K562 (cell line): ENCODE measurements at regions of chr6 and their contacts with region 1.

Region 1: DNA sequence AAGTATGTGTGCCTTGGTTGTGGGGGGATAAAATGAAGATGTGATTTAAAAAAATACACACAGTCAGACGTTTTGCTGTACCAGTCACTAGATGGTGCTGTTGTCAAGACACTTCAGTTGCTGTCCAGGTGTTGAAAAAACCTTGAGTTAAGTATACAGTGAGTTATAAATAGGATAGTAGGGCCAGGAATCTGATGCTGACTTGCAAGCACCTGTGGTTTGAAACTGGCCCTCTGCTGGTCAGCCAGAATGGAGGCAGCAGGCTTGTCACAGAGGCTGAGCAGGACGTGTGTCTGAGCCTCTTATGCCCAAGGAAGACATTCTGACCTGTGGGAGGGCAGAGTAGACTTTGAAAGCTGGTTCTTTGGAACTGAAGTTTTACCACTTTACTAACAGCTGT is 27.8 kb downstream of the RNF8 start:
- DNase-seq: peak; percentile 57 to 81 (median 67)
- ATAC-seq: peak; percentile 92
- H3K4me3 ChIP-seq: no peak overlapping the region
- H3K27ac ChIP-seq: no peak overlapping the region
- H3K4me1 ChIP-seq: no peaks in the 10 kb centered on the region
- H3K27me3 ChIP-seq: no peaks in the 10 kb centered on the region
- CTCF ChIP-seq: peak; percentile 75 to 94 (median 93)
- EP300 ChIP-seq: no peak
- POLR2A ChIP-seq: no peak
- RAD21 ChIP-seq: peak; percentile 81 to 95

Region 2: DNA sequence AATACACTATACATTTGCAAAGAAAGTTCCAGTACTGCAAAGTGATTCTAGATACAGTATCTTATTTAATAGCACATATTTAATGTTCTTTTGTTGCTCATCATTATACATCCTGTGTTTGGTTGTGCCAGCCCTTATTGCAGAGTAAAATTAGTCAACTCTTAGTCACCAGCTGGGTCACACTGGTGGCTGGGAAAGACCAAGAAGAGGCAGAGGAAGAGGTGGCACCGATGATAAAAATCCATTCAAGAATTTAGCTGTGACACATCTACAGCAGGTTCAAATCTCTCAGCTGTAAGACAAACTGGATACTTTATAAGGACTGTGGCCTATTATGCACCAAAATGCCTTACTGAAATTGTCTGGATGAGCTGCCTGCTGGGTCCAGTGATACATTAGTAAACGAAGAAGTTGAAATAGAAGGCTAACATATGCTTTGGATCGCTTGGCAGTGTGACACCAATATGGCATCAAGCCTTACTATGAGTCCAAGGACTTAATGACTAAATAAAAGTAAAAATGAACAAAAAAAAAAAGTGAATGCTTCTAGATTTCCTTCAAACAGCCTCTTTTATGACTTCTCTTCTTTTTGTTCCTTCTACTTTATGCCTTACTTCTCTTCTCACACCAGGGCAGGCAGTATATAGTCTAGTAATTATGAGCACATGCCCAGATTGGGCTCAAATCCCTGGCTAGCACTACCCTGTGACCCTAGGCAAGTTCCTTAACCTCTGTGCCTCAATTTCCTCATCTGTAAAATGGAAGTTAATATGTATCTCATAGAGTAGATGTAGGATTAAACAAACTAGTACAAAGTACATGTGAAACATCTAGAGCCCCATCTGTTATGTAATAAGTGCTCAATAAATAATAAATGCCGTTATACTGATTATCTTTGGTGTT is 57.2 kb before region 1 on chr6:
- CTCF ChIA-PET with region 1: interaction called, 9 read pairs
- POLR2A ChIA-PET with region 1: no interaction called
- in situ Hi-C with region 1: no loop called
- intact Hi-C with region 1: loop called (anchors 1 kb)
- DNase-seq: no peak
- ATAC-seq: no peak
- H3K4me3 ChIP-seq: no peak overlapping the region
- H3K27ac ChIP-seq: no peak overlapping the region
- H3K4me1 ChIP-seq: no peaks in the 10 kb centered on the region; a peak in 1 of 5 replicates
- H3K27me3 ChIP-seq: no peaks in the 10 kb centered on the region
- CTCF ChIP-seq: no peak
- EP300 ChIP-seq: no peak
- POLR2A ChIP-seq: no peak
- RAD21 ChIP-seq: no peak

Region 3: GRCh38 chr6:37406726-37407356 is 25.3 kb after region 1 on chr6:
- CTCF ChIA-PET with region 1: no interaction called
- POLR2A ChIA-PET with region 1: no interaction called
- in situ Hi-C with region 1: no loop called
- intact Hi-C with region 1: no loop called
- DNase-seq: no peak
- ATAC-seq: no peak
- H3K4me3 ChIP-seq: no peak overlapping the region
- H3K27ac ChIP-seq: no peak overlapping the region
- H3K4me1 ChIP-seq: peaks cover 0 to 7% of the 10 kb centered on the region in 2 experiments; a peak in 2 of 5 replicates
- H3K27me3 ChIP-seq: no peaks in the 10 kb centered on the region
- CTCF ChIP-seq: no peak
- EP300 ChIP-seq: no peak
- POLR2A ChIP-seq: no peak
- RAD21 ChIP-seq: no peak

Region 4: GRCh38 chr6:37432916-37433656 is 51.5 kb after region 1 on chr6 and contains the start of gene CMTR1:
- CTCF ChIA-PET with region 1: no interaction called
- POLR2A ChIA-PET with region 1: no interaction called
- in situ Hi-C with region 1: no loop called
- intact Hi-C with region 1: loop called (anchors 5 kb)
- DNase-seq: peak; percentile 97 to 99 (median 99)
- ATAC-seq: peak; percentile 95
- H3K4me3 ChIP-seq: peak within 1 kb of the TSS; percentile 88
- H3K27ac ChIP-seq: peak within 1 kb of the TSS; percentile 83
- H3K4me1 ChIP-seq: peaks cover 14 to 22% of the 10 kb centered on the region in 2 experiments
- H3K27me3 ChIP-seq: no peaks in the 10 kb centered on the region
- CTCF ChIP-seq: peak in 1 of 3 experiments; percentile 3; a peak in 2 of 6 replicates
- EP300 ChIP-seq: peak; percentile 36; the same call in 1 of the 2 replicates
- POLR2A ChIP-seq: peak; percentile 85
- RAD21 ChIP-seq: peak in 1 of 2 experiments; percentile 22; a peak in 2 of 4 replicates
- polyA plus RNA-seq, gene CMTR1: 2.9 to 5.5 TPM

Region 5: GRCh38 chr6:37459981-37460800 is 78.6 kb after region 1 on chr6:
- CTCF ChIA-PET with region 1: no interaction called
- POLR2A ChIA-PET with region 1: interaction called, 4 read pairs
- in situ Hi-C with region 1: no loop called
- intact Hi-C with region 1: loop called (anchors 2 kb)
- DNase-seq: peak; percentile 95 to 98 (median 96)
- ATAC-seq: peak; percentile 96
- H3K4me3 ChIP-seq: no peak overlapping the region
- H3K27ac ChIP-seq: peak overlapping the region; percentile 65
- H3K4me1 ChIP-seq: peaks cover 5 to 26% of the 10 kb centered on the region in 2 experiments
- H3K27me3 ChIP-seq: no peaks in the 10 kb centered on the region
- CTCF ChIP-seq: no peak
- EP300 ChIP-seq: peak; percentile 91
- POLR2A ChIP-seq: no peak
- RAD21 ChIP-seq: peak; percentile 11 to 32; a peak in 1 of 4 replicates

Region 6: DNA sequence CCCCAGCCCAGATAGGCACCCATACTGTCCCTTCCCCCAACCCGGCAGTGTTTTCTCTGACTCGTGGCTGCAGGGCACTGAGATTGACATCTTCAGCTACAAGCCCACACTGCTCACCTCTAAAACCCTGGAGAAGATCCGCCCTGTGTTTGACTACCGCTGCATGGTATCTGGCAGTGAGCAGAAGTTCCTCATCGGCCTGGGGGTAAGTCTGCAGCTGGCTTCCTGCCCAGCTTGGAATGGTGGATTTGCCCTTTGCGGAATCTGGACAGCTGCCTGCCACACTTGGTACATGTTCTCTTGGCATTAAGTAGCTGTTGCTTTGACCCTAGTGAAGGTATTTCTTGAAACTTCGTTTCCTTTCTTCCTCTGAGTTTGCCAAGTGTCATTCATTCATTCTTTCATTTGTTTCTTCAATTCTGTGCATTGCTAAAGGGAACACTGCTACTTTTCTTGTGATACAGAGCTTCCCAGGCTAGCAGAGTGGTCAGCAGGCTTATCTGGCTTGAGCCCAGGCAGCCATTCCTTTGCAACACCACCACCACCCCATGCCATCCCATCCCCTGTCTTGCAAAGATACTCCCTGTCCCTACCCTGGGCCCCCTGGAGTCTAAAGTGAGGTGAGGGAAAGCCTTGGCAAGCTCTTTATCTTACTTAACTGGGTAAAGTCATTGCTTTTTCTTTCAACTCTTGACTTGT is 92.0 kb after region 1 on chr6:
- CTCF ChIA-PET with region 1: no interaction called
- POLR2A ChIA-PET with region 1: no interaction called
- in situ Hi-C with region 1: loop called (anchors 5 kb)
- intact Hi-C with region 1: no loop called
- DNase-seq: no peak
- ATAC-seq: no peak
- H3K4me3 ChIP-seq: no peak overlapping the region
- H3K27ac ChIP-seq: no peak overlapping the region
- H3K4me1 ChIP-seq: peaks cover 0 to 5% of the 10 kb centered on the region in 2 experiments; a peak in 3 of 5 replicates
- H3K27me3 ChIP-seq: no peaks in the 10 kb centered on the region
- CTCF ChIP-seq: no peak
- EP300 ChIP-seq: no peak
- POLR2A ChIP-seq: no peak
- RAD21 ChIP-seq: no peak

Region 7: DNA sequence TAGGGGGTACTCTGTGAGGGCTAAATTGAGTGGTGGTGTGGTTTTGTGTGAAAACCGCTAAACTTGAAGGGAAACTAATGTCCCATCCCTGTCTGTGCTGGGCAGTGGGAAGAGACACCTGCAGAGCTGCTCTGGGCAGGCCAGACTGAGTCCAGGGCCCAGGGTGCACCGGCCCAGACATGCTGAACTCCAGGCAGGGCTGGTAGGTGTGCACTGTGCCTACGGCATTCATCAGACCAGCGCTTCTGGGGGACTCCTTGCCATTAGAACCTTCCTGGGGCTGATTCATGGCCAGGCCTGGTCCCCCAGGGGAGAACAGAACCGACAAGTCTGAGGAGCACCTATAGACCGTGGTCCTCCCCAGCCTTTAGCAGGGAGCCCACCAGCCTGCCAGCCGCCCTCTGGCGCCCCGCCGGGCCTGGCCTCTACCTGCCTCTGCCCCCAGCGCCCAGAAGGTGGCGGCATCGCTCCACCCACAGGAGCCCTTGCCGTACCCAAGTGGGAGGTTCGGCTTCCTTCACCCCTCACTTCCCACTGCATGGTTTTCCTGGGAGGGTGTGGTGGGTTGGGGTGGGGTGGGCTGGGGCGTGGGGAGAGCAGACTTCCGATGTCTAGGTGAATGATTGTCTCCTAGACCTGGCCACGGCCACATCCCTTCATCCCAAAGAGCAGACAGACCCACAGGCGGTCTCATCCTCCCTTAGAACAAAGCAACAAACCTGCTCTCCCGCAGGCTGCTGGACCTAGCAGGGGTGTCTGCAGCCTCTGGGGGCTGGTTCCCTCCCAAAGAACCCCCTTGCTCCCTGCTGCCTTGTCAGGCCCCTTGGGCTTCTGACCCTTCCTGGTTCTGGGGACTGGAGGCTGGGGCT is 102.6 kb after region 1 on chr6:
- CTCF ChIA-PET with region 1: interaction called, 15 read pairs
- POLR2A ChIA-PET with region 1: interaction called, 3 read pairs
- in situ Hi-C with region 1: no loop called
- intact Hi-C with region 1: loop called (anchors 1 kb)
- DNase-seq: peak; percentile 73 to 88 (median 86)
- ATAC-seq: peak; percentile 91
- H3K4me3 ChIP-seq: no peak overlapping the region
- H3K27ac ChIP-seq: no peak overlapping the region
- H3K4me1 ChIP-seq: peaks cover 6 to 21% of the 10 kb centered on the region in 2 experiments; a peak in 4 of 5 replicates
- H3K27me3 ChIP-seq: no peaks in the 10 kb centered on the region
- CTCF ChIP-seq: peak; percentile 83 to 98 (median 96)
- EP300 ChIP-seq: no peak
- POLR2A ChIP-seq: no peak
- RAD21 ChIP-seq: peak; percentile 71 to 87

Region 8: GRCh38 chr6:37566111-37566949 is 184.8 kb after region 1 on chr6:
- CTCF ChIA-PET with region 1: interaction called, 20 read pairs
- POLR2A ChIA-PET with region 1: no interaction called
- in situ Hi-C with region 1: loop called (anchors 10 kb)
- intact Hi-C with region 1: loop called (anchors 1 kb)
- DNase-seq: peak; percentile 70 to 89 (median 87)
- ATAC-seq: peak; percentile 95
- H3K4me3 ChIP-seq: no peak overlapping the region
- H3K27ac ChIP-seq: no peak overlapping the region
- H3K4me1 ChIP-seq: peaks cover 0 to 15% of the 10 kb centered on the region in 2 experiments; a peak in 2 of 5 replicates
- H3K27me3 ChIP-seq: peaks cover 42 to 87% of the 10 kb centered on the region in 2 experiments
- CTCF ChIP-seq: peak; percentile 90 to 94 (median 93)
- EP300 ChIP-seq: no peak
- POLR2A ChIP-seq: no peak
- RAD21 ChIP-seq: peak; percentile 80 to 94

Region 9: GRCh38 chr6:39102071-39102820 is 1720.7 kb after region 1 on chr6:
- CTCF ChIA-PET with region 1: no interaction called
- POLR2A ChIA-PET with region 1: no interaction called
- in situ Hi-C with region 1: no loop called
- intact Hi-C with region 1: no loop called
- DNase-seq: peak; percentile 79 to 89 (median 85)
- ATAC-seq: peak; percentile 99
- H3K4me3 ChIP-seq: no peak overlapping the region
- H3K27ac ChIP-seq: no peak overlapping the region
- H3K4me1 ChIP-seq: no peaks in the 10 kb centered on the region
- H3K27me3 ChIP-seq: peaks cover 5 to 10% of the 10 kb centered on the region in 2 experiments; a peak in 2 of 5 replicates
- CTCF ChIP-seq: peak; percentile 88 to 91 (median 91)
- EP300 ChIP-seq: no peak
- POLR2A ChIP-seq: no peak
- RAD21 ChIP-seq: peak; percentile 77 to 92